HepG2 (cell line): ENCODE measurements at regions of chr7 and their contacts with region 1.

Region 1: GRCh38 chr7:16098585-16099179 is 322.7 kb downstream of the CRPPA start:
- DNase-seq: no peak
- ATAC-seq: no peak; the same call in 2 of the 3 replicates
- H3K4me3 ChIP-seq: no peak overlapping the region
- H3K27ac ChIP-seq: no peak overlapping the region
- H3K4me1 ChIP-seq: no peaks in the 10 kb centered on the region
- H3K27me3 ChIP-seq: no peaks in the 10 kb centered on the region
- CTCF ChIP-seq: 0 out of 2 replicates have a peak, but pooled peaks have one; percentile 17
- EP300 ChIP-seq: no peak
- POLR2A ChIP-seq: no peak
- RAD21 ChIP-seq: no peak

Region 2: GRCh38 chr7:15703732-15704131 is 394.9 kb before region 1 on chr7:
- CTCF ChIA-PET with region 1: no interaction called
- POLR2A ChIA-PET with region 1: no interaction called
- in situ Hi-C with region 1: no loop called
- intact Hi-C with region 1: no loop called
- DNase-seq: no peak
- ATAC-seq: no peak
- H3K4me3 ChIP-seq: no peak overlapping the region
- H3K27ac ChIP-seq: no peak overlapping the region
- H3K4me1 ChIP-seq: no peaks in the 10 kb centered on the region
- H3K27me3 ChIP-seq: no peaks in the 10 kb centered on the region
- CTCF ChIP-seq: no peak
- EP300 ChIP-seq: no peak
- POLR2A ChIP-seq: no peak
- RAD21 ChIP-seq: no peak

Region 3: DNA sequence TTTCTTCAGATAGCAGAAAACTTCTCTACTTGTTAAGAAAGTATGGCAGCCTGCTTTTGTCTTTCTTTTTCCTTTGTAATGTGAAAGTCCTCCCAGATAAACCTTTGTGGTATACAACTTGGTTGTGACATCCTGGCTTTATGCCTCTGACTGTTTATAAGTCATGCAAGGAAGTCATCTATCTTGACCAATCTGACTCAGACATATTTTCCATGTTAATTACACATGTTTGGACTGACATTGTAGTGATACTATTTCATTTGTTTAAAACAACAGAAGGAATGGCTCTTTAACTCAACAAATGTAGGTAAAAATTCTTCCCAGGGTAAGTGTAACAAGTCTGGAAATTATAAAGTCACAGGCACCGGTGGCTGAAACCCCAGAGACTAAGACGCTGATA is 70.6 kb before region 1 on chr7:
- CTCF ChIA-PET with region 1: no interaction called
- POLR2A ChIA-PET with region 1: no interaction called
- in situ Hi-C with region 1: no loop called
- intact Hi-C with region 1: no loop called
- DNase-seq: no peak
- ATAC-seq: no peak
- H3K4me3 ChIP-seq: no peak overlapping the region
- H3K27ac ChIP-seq: no peak overlapping the region
- H3K4me1 ChIP-seq: no peaks in the 10 kb centered on the region
- H3K27me3 ChIP-seq: no peaks in the 10 kb centered on the region
- CTCF ChIP-seq: no peak
- EP300 ChIP-seq: no peak
- POLR2A ChIP-seq: no peak
- RAD21 ChIP-seq: no peak

Region 4: GRCh38 chr7:16078076-16078952 is 20.4 kb before region 1 on chr7:
- CTCF ChIA-PET with region 1: interaction called, 3 read pairs
- POLR2A ChIA-PET with region 1: no interaction called
- in situ Hi-C with region 1: no loop called
- intact Hi-C with region 1: loop called (anchors 1 kb)
- DNase-seq: peak; percentile 65
- ATAC-seq: peak; percentile 87
- H3K4me3 ChIP-seq: no peak overlapping the region
- H3K27ac ChIP-seq: no peak overlapping the region
- H3K4me1 ChIP-seq: no peaks in the 10 kb centered on the region
- H3K27me3 ChIP-seq: no peaks in the 10 kb centered on the region
- CTCF ChIP-seq: peak; percentile 79
- EP300 ChIP-seq: no peak
- POLR2A ChIP-seq: no peak
- RAD21 ChIP-seq: peak; percentile 17; the same call in 1 of the 2 replicates

Region 5: DNA sequence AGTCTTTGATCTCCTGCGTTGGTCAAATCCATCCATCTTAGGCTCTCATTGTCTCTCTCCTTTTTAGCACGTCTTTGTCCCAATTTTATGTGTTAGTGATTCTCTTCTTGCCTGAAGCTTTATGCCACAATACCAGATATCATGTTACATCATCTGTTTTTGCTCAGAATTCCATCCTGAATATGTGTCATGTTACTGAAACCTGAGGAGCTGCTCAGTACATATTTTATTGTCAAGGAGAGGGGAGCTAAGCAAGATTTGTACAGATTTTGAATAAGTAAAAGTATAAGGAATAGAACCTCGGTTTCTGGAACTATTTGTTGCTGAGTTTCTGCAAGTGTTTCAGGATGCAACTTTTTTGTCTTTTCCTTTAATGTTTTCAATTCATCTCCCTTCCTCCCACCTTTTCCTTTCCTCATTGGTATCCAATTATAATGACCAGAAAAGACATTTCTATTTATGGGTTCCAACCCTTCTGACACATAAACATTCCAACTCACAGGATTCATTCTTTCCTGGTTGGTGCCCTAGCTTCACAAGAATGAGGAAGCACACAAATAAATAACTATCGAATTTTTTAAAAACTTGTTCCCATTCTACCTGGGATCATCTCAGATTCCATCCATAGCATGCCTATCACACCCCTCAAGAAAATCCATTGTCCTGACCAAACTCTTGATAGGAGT is 30.9 kb after region 1 on chr7:
- CTCF ChIA-PET with region 1: no interaction called
- POLR2A ChIA-PET with region 1: no interaction called
- in situ Hi-C with region 1: no loop called
- intact Hi-C with region 1: no loop called
- DNase-seq: no peak
- ATAC-seq: no peak
- H3K4me3 ChIP-seq: no peak overlapping the region
- H3K27ac ChIP-seq: no peak overlapping the region
- H3K4me1 ChIP-seq: no peaks in the 10 kb centered on the region
- H3K27me3 ChIP-seq: no peaks in the 10 kb centered on the region
- CTCF ChIP-seq: no peak
- EP300 ChIP-seq: no peak
- POLR2A ChIP-seq: no peak
- RAD21 ChIP-seq: no peak

Region 6: GRCh38 chr7:16193631-16194030 is 94.9 kb after region 1 on chr7:
- CTCF ChIA-PET with region 1: no interaction called
- POLR2A ChIA-PET with region 1: no interaction called
- in situ Hi-C with region 1: no loop called
- intact Hi-C with region 1: no loop called
- DNase-seq: no peak
- ATAC-seq: no peak
- H3K4me3 ChIP-seq: no peak overlapping the region
- H3K27ac ChIP-seq: no peak overlapping the region
- H3K4me1 ChIP-seq: no peaks in the 10 kb centered on the region
- H3K27me3 ChIP-seq: no peaks in the 10 kb centered on the region
- CTCF ChIP-seq: no peak
- EP300 ChIP-seq: no peak
- POLR2A ChIP-seq: no peak
- RAD21 ChIP-seq: no peak